Head of caudate nucleus (tissue), 42 donors: ENCODE measurements at regions of chr20 and their contacts with region 1.

Region 1: DNA sequence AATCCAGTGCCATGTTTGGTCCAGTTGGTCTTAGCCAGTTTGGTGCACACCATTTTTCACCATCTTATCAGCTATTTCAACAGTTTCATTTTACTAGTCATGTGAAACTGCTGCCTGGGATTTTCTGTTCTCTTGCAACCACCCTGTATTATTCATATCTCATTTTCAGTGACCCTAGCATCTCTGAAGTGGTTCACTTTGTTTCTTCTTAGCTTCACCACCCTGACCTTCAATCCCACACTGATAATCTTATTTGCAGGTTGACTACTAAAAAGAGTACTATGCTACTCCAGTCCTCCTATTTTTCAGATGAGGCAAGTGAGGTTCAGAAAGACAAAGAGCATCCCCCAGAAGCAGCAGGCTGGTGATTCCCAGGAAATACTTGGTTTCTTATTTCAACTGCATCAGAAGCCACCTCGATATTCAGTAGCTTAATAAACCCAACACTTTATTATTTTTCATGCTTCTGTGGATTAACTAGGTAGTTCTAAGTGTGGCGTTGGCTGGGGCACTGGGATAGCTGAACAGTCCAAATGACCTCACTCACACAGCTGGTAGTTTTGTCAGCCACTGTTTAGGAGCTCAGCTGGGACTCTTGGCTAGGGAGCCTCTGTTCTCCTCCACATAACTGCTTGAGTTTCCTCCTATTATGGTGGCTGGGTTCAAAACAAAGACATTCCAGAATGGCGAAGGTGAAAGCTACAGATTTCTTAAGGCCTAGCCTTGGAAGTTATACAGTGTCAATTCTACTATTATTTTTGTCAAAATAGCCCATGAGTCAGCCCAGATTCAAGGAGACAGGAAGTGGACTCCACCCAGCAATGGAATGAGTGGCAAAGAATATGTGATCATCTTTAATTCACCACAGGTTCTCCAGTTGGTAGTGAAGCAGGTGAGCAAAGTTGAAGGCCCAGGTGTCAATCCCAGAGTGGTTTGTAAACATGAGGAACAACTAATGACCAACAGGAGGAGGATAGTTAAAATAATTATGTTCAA is 40.6 kb downstream of the BPIFB4 start:
- DNase-seq: no peak

Region 2: DNA sequence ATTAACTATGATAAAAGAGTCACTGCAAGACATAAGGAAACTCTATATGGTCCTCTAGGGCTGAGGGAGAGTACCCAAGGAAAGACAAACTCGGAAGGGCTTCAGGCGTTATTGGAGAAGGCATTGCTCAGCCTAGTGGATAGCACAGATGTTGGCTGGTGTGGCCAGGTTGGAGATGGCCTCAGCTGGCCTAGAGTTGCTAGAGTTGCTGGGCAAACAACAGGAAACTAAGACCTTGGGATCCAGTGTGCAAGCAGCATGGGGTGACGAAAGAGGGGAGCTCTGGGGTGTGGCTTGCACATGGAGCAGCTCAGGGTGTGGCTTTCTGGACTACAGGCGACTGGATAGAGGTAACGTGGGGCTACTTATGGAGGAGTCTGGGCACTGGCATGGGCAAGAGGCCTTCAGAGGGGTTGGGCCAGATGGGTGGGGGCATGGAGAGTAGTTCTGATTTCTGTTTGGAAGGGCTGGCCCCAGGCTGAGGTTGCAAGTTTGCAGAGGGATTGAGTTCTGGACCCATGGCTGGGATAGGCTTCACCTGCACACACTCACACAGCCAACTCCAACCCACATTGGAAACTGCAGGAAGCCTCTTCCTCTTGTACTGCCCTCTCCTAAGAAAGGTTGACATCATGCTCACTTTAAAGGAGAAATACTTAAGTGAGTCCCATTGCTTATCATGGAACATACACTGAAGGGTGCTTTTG is 93.8 kb before region 1 on chr20:
- intact Hi-C with region 1: no loop called
- DNase-seq: no peak

Region 3: DNA sequence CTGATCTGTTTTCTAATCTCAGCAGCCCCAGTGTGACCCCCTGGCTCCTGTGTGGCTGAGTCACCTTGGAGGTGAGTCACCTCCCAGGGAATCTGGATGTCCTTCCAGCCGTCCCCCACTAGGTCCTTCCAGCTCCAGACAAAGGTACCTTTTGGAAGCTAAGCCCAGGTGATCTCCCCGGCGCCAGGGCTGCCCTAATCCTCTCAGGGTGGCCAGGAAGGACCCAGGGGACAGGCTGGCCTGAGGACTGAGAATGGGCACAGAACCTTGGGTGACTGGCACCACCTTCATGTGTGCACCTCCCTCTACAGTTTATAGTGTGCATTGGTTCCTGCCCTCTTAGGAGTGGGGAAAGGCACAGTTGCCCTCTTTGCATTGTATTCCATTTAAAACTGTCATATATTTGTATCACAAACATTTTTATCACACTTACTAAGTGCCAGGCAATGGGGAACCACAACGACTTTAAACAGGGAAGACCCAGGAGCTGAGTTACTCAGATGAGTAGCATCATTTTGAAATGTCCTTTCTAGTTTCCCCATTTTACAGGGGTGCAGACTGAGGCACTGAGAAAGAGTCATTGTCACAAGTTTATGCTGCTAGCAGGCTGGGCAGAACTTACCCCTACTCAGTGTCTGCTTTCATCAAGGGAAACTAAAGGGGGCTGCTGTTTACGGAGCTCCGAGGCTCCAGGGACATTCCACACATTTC is 43.2 kb before region 1 on chr20:
- intact Hi-C with region 1: no loop called
- DNase-seq: peak in 10 of 42 donors; percentile 24 to 69 (median 40)

Region 4: GRCh38 chr20:33192912-33193501 is 73.0 kb after region 1 on chr20:
- intact Hi-C with region 1: loop called (anchors 10 kb)
- DNase-seq: no peak